Activated CD4-positive, alpha-beta T cell treated with anti-CD3 and anti-CD28 coated beads for 36 hours (primary cell): ENCODE measurements at regions of chr17 and their contacts with region 1.

Region 1: GRCh38 chr17:17836250-17836817 is 452 bp downstream of the SREBF1 start:
- DNase-seq: peak; percentile 99
- ATAC-seq: peak; percentile 74
- H3K4me3 Mint-ChIP-seq: peak overlapping the region; percentile 94
- H3K27ac Mint-ChIP-seq: peak overlapping the region; percentile 98
- H3K4me1 Mint-ChIP-seq: peaks cover 74% of the 10 kb centered on the region
- H3K27me3 Mint-ChIP-seq: no peaks in the 10 kb centered on the region

Region 2: GRCh38 chr17:17280613-17281549 is 555.5 kb before region 1 on chr17 and contains the start of gene COPS3:
- CTCF ChIA-PET with region 1: no interaction called
- POLR2A ChIA-PET with region 1: no interaction called
- intact Hi-C with region 1: loop called in 1 of 2 experiments (anchors 2 kb)
- DNase-seq: peak; percentile 99
- ATAC-seq: peak; percentile 94
- H3K4me3 Mint-ChIP-seq: peak within 1 kb of the TSS; percentile 92
- H3K27ac Mint-ChIP-seq: peak within 1 kb of the TSS; percentile 95
- H3K4me1 Mint-ChIP-seq: peaks cover 41% of the 10 kb centered on the region
- H3K27me3 Mint-ChIP-seq: no peaks in the 10 kb centered on the region
- total RNA-seq, gene COPS3: 79.6 to 83.1 TPM

Region 3: DNA sequence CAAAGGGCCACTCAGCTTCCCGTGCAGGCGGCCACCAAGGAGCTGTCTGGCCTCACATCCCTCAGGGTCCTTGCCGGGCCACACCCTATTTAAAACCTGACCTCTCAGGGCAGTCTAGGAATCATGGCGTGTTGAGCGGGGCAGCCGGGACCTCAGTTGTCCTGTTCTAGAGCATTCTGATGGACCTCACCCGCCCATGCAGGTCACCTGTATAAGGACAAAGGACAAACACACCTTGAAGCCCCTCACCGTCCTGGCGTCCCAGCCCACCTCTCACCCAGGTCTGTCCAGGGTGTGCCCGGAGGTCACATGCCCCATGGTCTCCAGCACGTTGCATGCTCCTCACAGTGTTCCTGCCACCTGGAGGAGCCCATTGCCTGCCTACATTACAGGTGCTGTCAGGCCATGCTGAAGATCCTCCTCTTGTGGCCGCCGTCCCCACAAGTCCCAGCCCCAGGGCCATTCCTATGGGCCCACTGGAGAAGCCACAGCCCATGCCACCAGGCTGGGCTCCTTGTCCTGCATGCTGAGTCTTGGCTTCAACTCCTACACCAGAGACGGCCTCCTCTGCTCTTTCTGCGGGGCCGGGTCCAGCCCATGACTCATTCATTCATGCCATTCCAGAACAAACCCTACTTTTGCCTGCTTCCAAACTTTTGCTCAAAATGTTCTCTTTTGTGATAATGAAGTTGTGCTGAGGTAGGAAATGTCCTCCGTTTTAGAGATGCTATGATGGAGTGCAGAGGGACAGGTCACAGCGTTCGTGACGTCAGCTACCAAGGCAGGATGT is 291.1 kb before region 1 on chr17:
- CTCF ChIA-PET with region 1: no interaction called
- POLR2A ChIA-PET with region 1: no interaction called
- intact Hi-C with region 1: no loop called
- DNase-seq: no peak
- ATAC-seq: no peak
- H3K4me3 Mint-ChIP-seq: no peak overlapping the region
- H3K27ac Mint-ChIP-seq: no peak overlapping the region
- H3K4me1 Mint-ChIP-seq: no peaks in the 10 kb centered on the region
- H3K27me3 Mint-ChIP-seq: no peaks in the 10 kb centered on the region

Region 4: DNA sequence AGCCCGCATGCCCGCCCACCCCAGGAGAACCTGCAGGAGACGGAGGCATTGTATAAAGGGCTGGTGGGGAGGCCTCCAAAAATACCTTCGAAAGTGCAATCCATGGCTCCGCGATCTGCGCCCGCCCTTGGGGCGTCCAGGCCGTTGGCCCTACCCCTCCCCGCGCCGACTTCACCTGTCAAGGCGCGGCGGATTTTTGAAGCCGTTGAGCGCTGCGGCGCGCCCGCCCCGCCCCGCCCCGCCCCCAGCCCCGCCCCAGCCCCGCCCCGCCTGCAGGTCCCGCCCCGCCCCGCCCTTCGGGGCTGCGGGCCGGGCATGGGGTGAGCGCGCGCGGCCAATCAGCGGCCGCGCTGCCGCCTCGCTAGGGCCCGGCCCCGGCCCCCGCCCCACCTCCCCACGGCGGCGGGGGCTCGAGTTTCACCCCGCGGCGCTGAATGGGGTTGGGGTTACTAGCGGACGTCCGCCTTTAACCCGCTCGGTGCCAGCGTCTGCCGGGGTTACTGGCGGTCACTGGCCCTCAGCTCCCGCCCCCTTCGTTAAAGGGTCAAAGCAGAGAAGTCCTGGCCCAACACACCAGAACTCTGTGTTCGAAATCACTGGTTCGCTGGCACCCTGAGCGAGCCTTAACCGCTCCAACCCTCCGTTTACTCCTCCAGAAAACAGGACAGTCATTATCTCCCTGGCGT is 12.8 kb before region 1 on chr17:
- CTCF ChIA-PET with region 1: interaction called, 5 read pairs
- POLR2A ChIA-PET with region 1: interaction called, 14 read pairs
- intact Hi-C with region 1: loop called (anchors 1 kb)
- DNase-seq: peak; percentile 90
- ATAC-seq: peak; percentile 80
- H3K4me3 Mint-ChIP-seq: peak overlapping the region; percentile 72
- H3K27ac Mint-ChIP-seq: peak overlapping the region; percentile 96
- H3K4me1 Mint-ChIP-seq: peaks cover 92% of the 10 kb centered on the region
- H3K27me3 Mint-ChIP-seq: no peaks in the 10 kb centered on the region

Region 5: DNA sequence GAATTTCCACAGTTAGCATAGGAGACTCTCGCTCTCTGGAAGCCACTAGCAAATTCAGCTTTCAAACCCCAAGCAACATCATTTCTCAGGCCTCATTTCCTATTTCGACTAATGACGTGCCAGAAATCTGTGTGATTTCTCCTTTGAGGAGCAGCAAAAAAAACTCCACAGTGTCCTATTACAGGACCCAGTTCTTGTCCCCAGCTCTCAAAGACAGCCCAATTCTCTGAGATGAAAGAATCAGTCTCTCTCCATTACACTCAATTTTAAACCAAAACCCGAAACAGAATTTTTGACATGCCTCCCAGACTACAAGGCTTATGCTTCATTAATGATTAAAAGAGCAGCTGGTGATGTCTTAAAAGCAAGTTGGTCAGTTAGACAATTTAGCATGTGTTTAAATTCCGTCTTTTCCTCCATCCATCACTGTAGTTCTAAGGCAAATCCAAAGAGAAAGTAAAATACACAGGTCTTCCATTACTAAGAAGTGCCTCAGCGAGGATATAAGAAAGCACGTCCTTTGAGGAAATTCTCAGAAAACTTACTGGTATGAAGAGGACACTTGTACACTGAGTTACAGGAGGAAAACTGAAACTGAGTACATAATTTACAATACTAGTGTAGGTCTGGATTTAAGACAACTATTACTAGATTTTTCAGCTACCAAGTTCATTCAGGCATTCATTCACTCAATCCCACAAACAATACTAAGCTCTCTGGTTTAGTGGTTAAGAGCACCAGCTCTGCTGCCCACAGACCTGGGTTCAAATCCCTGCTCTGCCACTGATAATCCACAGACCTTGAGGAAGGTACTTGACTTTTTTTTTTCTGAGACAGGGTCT is 123.4 kb after region 1 on chr17:
- CTCF ChIA-PET with region 1: interaction called, 3 read pairs
- POLR2A ChIA-PET with region 1: no interaction called
- intact Hi-C with region 1: loop called in 1 of 2 experiments (anchors 1 kb)
- DNase-seq: peak; percentile 67
- ATAC-seq: peak; percentile 61
- H3K4me3 Mint-ChIP-seq: peak overlapping the region; percentile 71
- H3K27ac Mint-ChIP-seq: peak overlapping the region; percentile 95
- H3K4me1 Mint-ChIP-seq: peaks cover 69% of the 10 kb centered on the region
- H3K27me3 Mint-ChIP-seq: no peaks in the 10 kb centered on the region